ENCODE measurements at regions of chr6 and their contacts with region 1.

Region 1: GRCh38 chr6:164185471-164185871 is 771.0 kb downstream of the QKI start:
- DNase-seq: no peak
- H3K4me3 ChIP-seq: no peak overlapping the region
- H3K27ac ChIP-seq: no peak overlapping the region
- H3K4me1 ChIP-seq: no peaks in the 10 kb centered on the region
- H3K27me3 ChIP-seq: no peaks in the 10 kb centered on the region
- CTCF ChIP-seq: no peak
- POLR2A ChIP-seq: no peak

Region 2: DNA sequence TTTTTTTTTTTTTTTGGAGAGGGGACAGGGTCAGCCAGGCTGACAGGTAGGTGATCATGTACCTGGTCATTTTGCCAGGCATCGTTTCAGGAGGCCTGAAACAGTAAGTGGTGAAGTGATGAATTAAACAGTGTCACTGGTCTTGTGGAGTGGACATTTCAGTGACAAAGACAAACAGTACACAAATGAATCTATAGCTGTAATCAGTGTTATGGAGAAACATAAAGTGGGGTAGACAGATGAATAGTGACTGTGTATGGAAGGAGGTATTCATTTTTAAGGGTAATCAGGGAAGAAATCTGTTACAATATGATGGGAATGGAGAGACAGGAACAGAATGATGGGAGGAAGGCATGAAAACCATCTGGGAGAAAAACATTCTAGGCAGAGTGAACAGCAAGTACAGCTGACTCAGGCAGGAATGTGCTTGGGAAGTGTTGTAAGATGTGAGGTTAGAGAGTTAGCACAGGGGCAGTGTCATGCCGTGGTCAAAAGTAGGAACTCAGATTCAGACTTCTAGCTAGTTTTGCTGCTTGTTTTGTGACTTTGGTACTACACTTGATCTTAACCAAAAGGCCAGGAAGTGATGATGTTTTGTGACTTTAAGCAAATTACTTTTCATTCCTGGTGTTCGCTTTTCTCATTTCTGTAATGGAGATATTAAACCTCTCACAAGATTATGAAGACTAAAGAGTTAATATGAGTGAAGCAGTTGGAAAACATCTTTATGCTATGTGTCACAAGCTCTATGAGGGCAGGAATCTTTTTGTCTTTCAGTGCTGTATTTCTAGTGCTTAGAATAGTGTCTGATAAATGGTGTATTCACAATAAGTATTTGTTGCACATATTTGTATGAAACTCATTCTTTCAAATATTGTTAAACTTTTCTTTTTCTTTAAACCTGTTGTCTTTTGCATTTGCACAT is 727.6 kb before region 1 on chr6:
- intact Hi-C with region 1: loop called (anchors 5 kb)
- DNase-seq: no peak
- H3K4me3 ChIP-seq: no peak overlapping the region
- H3K27ac ChIP-seq: peak overlapping the region; percentile 1 to 12
- H3K4me1 ChIP-seq: peaks cover 0 to 10% of the 10 kb centered on the region in 2 donors
- H3K27me3 ChIP-seq: no peaks in the 10 kb centered on the region
- CTCF ChIP-seq: no peak
- POLR2A ChIP-seq: no peak

Region 3: DNA sequence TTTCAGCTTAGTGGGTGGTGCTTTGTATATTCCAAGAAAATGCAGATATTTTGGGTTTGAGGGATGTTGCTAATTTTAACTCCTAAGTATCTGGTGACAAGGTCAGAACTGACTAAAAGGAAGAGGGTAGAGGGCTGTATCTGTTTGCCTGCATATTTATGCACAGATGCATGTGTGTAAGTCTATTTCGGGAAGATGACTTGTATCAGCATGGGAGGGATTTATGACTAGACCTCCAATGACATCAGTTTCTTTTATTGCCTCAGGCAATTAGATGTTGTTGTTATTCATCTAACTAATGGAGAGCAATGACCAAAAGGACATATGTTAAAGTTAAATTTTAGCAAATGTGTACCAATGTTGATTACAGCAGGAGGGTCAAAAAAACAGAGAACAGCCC is 36.7 kb before region 1 on chr6:
- intact Hi-C with region 1: loop called (anchors 2 kb)
- DNase-seq: no peak
- H3K4me3 ChIP-seq: no peak overlapping the region
- H3K27ac ChIP-seq: no peak overlapping the region
- H3K4me1 ChIP-seq: peaks cover 0 to 8% of the 10 kb centered on the region in 2 donors
- H3K27me3 ChIP-seq: no peaks in the 10 kb centered on the region
- CTCF ChIP-seq: no peak
- POLR2A ChIP-seq: no peak

Measured in breast epithelium (tissue), 4 donors.